ENCODE measurements at regions of chr17 and their contacts with region 1.

Region 1: DNA sequence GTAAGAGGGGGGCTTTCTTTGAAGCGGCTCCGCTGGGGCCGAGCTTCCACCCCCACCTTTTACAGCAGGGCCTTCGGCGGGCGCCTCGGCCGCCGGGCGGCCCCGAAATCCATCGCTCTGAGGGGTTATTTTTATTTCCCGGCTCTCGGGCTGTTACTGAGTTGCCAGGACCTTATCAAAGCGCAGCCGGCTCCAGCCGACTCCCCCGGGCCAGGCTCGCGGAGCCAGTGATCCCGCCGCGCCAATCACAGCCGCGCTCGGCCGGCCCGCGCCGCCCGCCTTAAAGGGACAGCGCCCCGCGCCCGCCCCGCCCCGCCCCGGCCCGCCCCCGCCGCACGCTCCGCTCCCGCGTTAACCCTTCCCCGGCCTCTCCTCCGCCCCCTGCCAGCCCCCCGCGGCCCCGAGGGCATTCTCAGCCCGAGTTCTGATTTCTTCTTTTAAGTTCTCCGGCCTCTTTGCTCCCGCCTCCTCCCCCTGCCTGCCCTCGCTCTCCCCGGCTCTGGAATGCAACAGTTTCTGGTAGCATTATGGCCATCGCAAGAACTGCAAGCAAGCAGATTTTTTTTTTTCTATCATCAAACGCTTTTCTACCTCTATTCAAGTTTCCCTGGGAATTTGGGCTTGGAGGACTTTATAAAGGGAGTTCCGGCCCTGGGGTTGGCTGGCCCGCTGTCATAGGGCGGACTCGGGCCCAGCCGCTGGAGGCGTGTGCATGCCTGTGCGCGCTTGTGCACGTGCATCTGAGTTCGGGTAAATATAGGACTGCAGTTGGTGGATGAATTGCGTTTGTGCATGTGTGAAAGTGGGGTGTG is at the start of gene AXIN2:
- DNase-seq: peak; percentile 97
- ATAC-seq: peak; percentile 52
- H3K4me3 ChIP-seq: peak within 1 kb of the TSS; percentile 26 to 62 (median 43)
- H3K27ac ChIP-seq: peak within 1 kb of the TSS; percentile 96
- H3K4me1 ChIP-seq: peaks cover 44% of the 10 kb centered on the region
- H3K27me3 ChIP-seq: no peaks in the 10 kb centered on the region; a peak in 1 of 5 replicates
- CTCF ChIP-seq: peak; percentile 19; the same call in 1 of the 2 replicates
- EP300 ChIP-seq: peak; percentile 53 to 96; a peak in 3 of 4 replicates
- POLR2A ChIP-seq: peak in 1 of 2 experiments; percentile 29; a peak in 1 of 4 replicates
- RAD21 ChIP-seq: no peak
- total RNA-seq, gene AXIN2: 53.8 and 58.6 TPM in 2 replicates

Region 2: DNA sequence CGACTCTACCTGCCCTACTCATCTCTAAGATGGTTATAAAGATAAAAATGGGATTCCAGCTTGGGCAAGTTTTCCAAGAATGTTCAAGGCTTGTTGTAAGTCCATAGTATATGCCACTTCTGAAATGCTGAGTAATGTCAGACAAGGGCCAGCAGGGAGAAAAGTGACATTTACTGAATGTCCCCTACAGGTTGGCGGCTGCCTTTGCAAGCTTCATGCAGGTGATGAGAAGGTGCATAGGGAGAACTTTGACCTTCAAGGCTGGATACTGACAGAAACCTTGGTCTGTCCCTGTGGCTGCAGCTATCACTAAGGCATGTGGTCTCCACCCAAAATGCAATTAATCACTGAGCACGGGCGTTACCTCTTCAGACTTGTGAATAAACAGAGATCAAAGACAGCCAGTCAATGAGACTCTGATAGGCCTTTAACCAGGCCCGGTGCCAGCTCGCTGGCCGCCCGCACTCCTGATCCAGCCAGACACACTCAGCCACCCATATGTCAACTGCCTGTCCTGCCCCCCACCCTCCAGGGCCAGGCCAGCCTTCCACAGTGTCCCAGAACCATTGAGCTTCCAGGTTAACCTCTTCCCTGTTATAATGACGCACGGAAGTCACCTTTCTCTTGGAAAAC is 26.7 kb after region 1 on chr17:
- CTCF ChIA-PET with region 1: no interaction called
- POLR2A ChIA-PET with region 1: interaction called, 14 read pairs
- in situ Hi-C with region 1: no loop called
- intact Hi-C with region 1: loop called (anchors 1 kb)
- DNase-seq: peak; percentile 99
- ATAC-seq: peak; percentile 81
- H3K4me3 ChIP-seq: peak overlapping the region; percentile 3 to 47 (median 25); a peak in 3 of 6 replicates
- H3K27ac ChIP-seq: peak overlapping the region; percentile 14
- H3K4me1 ChIP-seq: peaks cover 82% of the 10 kb centered on the region
- H3K27me3 ChIP-seq: no peaks in the 10 kb centered on the region
- CTCF ChIP-seq: peak; percentile 58
- EP300 ChIP-seq: peak in 1 of 2 experiments; percentile 90; a peak in 2 of 4 replicates
- POLR2A ChIP-seq: no peak
- RAD21 ChIP-seq: peak; percentile 67; the same call in 1 of the 2 replicates

Region 3: GRCh38 chr17:65627891-65628659 is 66.5 kb after region 1 on chr17:
- CTCF ChIA-PET with region 1: no interaction called
- POLR2A ChIA-PET with region 1: interaction called, 3 read pairs
- in situ Hi-C with region 1: loop called (anchors 5 kb)
- intact Hi-C with region 1: loop called (anchors 5 kb)
- DNase-seq: peak; percentile 91
- ATAC-seq: peak; percentile 97
- H3K4me3 ChIP-seq: peak overlapping the region in 1 of 3 experiments; percentile 12; a peak in 1 of 6 replicates
- H3K27ac ChIP-seq: peak overlapping the region; percentile 3
- H3K4me1 ChIP-seq: peaks cover 38% of the 10 kb centered on the region
- H3K27me3 ChIP-seq: no peaks in the 10 kb centered on the region
- CTCF ChIP-seq: no peak
- EP300 ChIP-seq: peak in 1 of 2 experiments; percentile 80; a peak in 2 of 4 replicates
- POLR2A ChIP-seq: no peak
- RAD21 ChIP-seq: no peak

Region 4: DNA sequence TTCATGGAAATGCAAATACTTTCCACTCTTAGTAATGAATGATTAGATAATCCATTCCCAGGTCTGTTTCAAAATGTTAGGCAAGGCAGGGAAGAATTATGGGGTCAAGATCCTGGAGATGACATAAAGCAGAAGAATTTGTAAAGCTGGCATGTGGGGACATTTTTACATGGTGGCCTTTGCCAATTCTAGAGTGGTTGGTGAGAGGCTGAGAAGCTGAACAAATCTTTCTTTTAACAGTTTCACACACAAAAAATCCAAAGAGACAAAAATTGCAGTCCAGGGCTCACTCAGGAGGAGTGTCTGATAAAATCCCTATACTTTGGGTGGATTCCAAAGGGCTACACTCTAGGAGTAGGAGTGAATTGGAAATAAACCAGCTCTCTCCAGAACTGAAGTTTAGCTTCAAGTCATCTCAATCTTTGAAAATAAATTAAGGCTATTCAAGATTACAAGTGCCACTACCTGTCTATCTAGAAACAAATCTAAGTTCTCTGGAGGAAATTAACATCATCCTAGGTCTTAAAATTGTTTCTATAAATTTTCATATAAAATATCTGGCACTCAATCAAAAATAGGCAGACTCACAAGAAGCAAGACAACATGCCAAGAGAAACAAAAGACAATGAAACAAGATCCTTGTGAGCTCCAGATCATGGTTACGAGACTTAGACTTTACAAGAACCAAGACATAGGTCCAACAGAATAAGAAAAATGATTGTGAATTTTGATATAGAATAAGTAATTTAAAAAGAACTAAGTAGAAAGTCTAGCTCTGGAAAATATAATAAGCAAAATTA is 112.8 kb after region 1 on chr17:
- CTCF ChIA-PET with region 1: no interaction called
- POLR2A ChIA-PET with region 1: interaction called, 7 read pairs
- in situ Hi-C with region 1: no loop called
- intact Hi-C with region 1: loop called (anchors 2 kb)
- DNase-seq: no peak
- ATAC-seq: no peak
- H3K4me3 ChIP-seq: no peak overlapping the region
- H3K27ac ChIP-seq: no peak overlapping the region
- H3K4me1 ChIP-seq: peaks cover 24% of the 10 kb centered on the region
- H3K27me3 ChIP-seq: no peaks in the 10 kb centered on the region
- CTCF ChIP-seq: no peak
- EP300 ChIP-seq: no peak
- POLR2A ChIP-seq: no peak
- RAD21 ChIP-seq: no peak

Region 5: GRCh38 chr17:65690626-65691310 is 129.2 kb after region 1 on chr17:
- CTCF ChIA-PET with region 1: no interaction called
- POLR2A ChIA-PET with region 1: no interaction called
- in situ Hi-C with region 1: no loop called
- intact Hi-C with region 1: loop called (anchors 1 kb)
- DNase-seq: peak; percentile 95
- ATAC-seq: peak; percentile 88
- H3K4me3 ChIP-seq: peak overlapping the region in 2 of 3 experiments; percentile 6 to 30; a peak in 1 of 6 replicates
- H3K27ac ChIP-seq: peak overlapping the region; percentile 62
- H3K4me1 ChIP-seq: peaks cover 51% of the 10 kb centered on the region
- H3K27me3 ChIP-seq: no peaks in the 10 kb centered on the region
- CTCF ChIP-seq: peak; percentile 37
- EP300 ChIP-seq: peak in 1 of 2 experiments; percentile 99; a peak in 2 of 4 replicates
- POLR2A ChIP-seq: no peak
- RAD21 ChIP-seq: no peak

Region 6: GRCh38 chr17:65704731-65705130 is 143.1 kb after region 1 on chr17:
- CTCF ChIA-PET with region 1: no interaction called
- POLR2A ChIA-PET with region 1: no interaction called
- in situ Hi-C with region 1: no loop called
- intact Hi-C with region 1: no loop called
- DNase-seq: no peak
- ATAC-seq: no peak
- H3K4me3 ChIP-seq: no peak overlapping the region
- H3K27ac ChIP-seq: no peak overlapping the region
- H3K4me1 ChIP-seq: peaks cover 12% of the 10 kb centered on the region; the same call in 1 of the 2 replicates
- H3K27me3 ChIP-seq: no peaks in the 10 kb centered on the region
- CTCF ChIP-seq: no peak
- EP300 ChIP-seq: no peak
- POLR2A ChIP-seq: no peak
- RAD21 ChIP-seq: no peak

Region 7: DNA sequence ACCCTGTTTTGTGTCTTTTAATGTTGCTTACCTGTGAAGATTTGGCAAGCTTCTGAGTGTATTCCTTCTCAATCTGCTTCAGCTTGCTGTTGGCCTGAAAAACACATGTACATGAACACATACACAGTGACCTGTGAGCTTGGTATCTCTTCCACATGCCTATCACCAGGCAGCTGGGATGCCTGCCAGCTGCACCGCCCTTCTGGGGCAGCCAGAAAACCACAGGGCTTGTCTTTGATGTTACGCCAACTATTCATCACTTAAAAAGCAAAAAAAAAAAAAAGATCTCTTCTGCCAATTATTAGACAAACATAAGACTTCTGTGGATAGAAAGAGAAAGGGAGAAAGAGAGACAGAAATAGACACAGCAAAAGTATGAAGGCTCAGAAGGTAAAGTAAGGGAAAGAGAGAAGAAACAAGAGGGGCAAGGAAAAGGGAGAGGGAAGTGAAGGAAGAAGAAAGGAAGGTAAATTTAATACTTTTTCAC is 189.1 kb after region 1 on chr17:
- CTCF ChIA-PET with region 1: no interaction called
- POLR2A ChIA-PET with region 1: interaction called, 8 read pairs
- in situ Hi-C with region 1: no loop called
- intact Hi-C with region 1: loop called (anchors 2 kb)
- DNase-seq: peak; percentile 99
- ATAC-seq: peak; percentile 99
- H3K4me3 ChIP-seq: peak overlapping the region in 2 of 3 experiments; percentile 3 to 15; a peak in 1 of 6 replicates
- H3K27ac ChIP-seq: peak overlapping the region; percentile 49
- H3K4me1 ChIP-seq: peaks cover 44% of the 10 kb centered on the region
- H3K27me3 ChIP-seq: no peaks in the 10 kb centered on the region
- CTCF ChIP-seq: no peak
- EP300 ChIP-seq: peak in 1 of 2 experiments; percentile 92; a peak in 2 of 4 replicates
- POLR2A ChIP-seq: no peak
- RAD21 ChIP-seq: no peak

Measured in HepG2 (cell line).